Common myeloid progenitor, CD34-positive (primary cell): ENCODE measurements at regions of chr6 and their contacts with region 1.

Region 1: GRCh38 chr6:21593412-21593926 is at the start of gene SOX4:
- DNase-seq: peak; percentile 98 to 99 (median 99)
- H3K4me3 ChIP-seq: peak within 1 kb of the TSS; percentile 96 to 100 (median 99)
- H3K27ac ChIP-seq: peak within 1 kb of the TSS; percentile 64 to 85
- H3K4me1 ChIP-seq: peaks cover 11 to 23% (median 15%) of the 10 kb centered on the region in 4 experiments
- H3K27me3 ChIP-seq: no peaks in the 10 kb centered on the region

Region 2: DNA sequence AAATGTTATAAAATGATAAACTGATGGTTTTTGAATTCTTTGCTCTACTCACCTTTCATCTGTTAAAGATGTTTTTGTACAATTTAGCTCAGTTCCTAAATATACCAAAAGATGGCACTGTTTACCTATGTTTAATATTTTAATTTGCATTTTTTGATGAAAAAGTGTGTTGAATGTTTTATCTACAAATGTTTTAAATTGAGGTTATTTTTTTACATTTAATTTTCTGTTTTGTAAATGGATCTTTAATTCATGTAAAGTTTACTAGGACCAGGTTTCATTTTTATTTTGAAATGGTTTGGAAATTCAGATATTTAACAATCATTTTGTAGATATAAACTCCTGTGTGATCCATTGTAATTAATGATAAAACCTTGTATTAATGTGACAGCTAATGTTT is 1029.2 kb before region 1 on chr6:
- CTCF ChIA-PET with region 1: interaction called, 61 read pairs
- POLR2A ChIA-PET with region 1: interaction called, 10 read pairs
- DNase-seq: peak; percentile 38 to 61 (median 47)
- H3K4me3 ChIP-seq: peak overlapping the region in 5 of 7 experiments; percentile 19 to 66 (median 35)
- H3K27ac ChIP-seq: peak overlapping the region in 1 of 2 experiments; percentile 58
- H3K4me1 ChIP-seq: peaks cover 0 to 20% (median 9%) of the 10 kb centered on the region in 4 experiments
- H3K27me3 ChIP-seq: no peaks in the 10 kb centered on the region